Ascending aorta (tissue), 2 donors: ENCODE measurements at regions of chr7 and their contacts with region 1.

Region 1: DNA sequence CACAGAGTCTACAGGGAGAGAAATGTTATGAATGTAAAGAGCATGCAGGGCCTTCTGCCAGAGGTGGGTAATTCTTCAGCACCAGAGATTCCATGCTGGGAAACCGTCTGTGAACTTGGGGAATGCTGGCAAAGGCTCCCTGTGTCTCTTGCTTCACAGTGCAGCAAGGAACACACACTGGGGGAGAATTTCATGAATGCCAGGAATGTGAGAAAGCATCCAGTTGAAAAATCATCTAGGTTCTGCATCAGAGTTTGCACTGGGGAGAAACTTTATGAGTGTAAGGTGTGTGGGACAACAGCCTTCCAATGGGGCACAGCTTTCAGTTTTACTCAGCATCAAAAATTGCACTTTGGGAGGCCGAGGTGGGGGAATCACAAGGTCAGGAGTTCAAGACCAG is 224.3 kb upstream of the IGFBP3 start:
- DNase-seq: peak in 1 of 2 donors; percentile 75
- H3K4me3 ChIP-seq: no peak overlapping the region
- H3K27ac ChIP-seq: peak overlapping the region; percentile 8 to 9
- H3K4me1 ChIP-seq: peaks cover 9 to 19% of the 10 kb centered on the region in 2 donors
- H3K27me3 ChIP-seq: no peaks in the 10 kb centered on the region
- CTCF ChIP-seq: no peak

Region 2: GRCh38 chr7:45610019-45610418 is 535.4 kb before region 1 on chr7:
- intact Hi-C with region 1: no loop called
- DNase-seq: no peak
- H3K4me3 ChIP-seq: no peak overlapping the region
- H3K27ac ChIP-seq: no peak overlapping the region
- H3K4me1 ChIP-seq: no peaks in the 10 kb centered on the region
- H3K27me3 ChIP-seq: no peaks in the 10 kb centered on the region
- CTCF ChIP-seq: no peak

Region 3: DNA sequence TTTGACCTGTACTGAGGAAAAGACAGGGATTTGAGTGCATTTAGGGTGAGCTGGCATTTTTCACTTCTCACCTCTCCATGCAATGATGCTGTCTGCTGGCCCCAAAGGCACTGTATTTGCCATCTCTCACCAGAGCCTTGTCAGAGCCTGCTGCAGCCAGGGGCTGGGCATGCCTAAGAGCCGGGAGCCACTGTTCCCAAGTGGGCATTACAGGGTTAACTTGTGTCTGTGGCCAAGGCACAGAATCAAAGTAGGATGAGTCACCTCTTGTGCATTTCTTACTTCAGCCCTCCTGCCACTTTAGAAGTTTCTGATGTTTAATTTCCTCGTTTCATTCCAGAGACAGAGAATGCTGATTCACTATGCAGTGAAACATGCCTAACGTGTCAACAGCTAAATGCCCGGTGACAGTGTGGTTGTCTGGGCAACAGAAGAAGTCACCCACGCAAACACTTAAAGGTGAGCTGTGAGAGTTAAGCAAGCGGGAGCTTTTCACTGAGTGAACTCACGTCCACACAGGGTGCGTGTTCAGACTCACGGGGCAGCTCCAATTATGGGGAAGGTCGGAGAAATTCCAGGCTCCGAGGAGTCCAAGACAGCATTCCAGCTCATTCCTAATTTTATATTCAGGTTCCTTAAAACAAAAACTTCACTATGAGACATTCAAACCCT is 167.3 kb before region 1 on chr7:
- intact Hi-C with region 1: loop called (anchors 2 kb)
- DNase-seq: peak in 1 of 2 donors; percentile 88
- H3K4me3 ChIP-seq: peak overlapping the region in 1 of 2 donors; percentile 13
- H3K27ac ChIP-seq: peak overlapping the region; percentile 78 to 87
- H3K4me1 ChIP-seq: peaks cover 13 to 31% of the 10 kb centered on the region in 2 donors
- H3K27me3 ChIP-seq: no peaks in the 10 kb centered on the region
- CTCF ChIP-seq: no peak

Region 4: DNA sequence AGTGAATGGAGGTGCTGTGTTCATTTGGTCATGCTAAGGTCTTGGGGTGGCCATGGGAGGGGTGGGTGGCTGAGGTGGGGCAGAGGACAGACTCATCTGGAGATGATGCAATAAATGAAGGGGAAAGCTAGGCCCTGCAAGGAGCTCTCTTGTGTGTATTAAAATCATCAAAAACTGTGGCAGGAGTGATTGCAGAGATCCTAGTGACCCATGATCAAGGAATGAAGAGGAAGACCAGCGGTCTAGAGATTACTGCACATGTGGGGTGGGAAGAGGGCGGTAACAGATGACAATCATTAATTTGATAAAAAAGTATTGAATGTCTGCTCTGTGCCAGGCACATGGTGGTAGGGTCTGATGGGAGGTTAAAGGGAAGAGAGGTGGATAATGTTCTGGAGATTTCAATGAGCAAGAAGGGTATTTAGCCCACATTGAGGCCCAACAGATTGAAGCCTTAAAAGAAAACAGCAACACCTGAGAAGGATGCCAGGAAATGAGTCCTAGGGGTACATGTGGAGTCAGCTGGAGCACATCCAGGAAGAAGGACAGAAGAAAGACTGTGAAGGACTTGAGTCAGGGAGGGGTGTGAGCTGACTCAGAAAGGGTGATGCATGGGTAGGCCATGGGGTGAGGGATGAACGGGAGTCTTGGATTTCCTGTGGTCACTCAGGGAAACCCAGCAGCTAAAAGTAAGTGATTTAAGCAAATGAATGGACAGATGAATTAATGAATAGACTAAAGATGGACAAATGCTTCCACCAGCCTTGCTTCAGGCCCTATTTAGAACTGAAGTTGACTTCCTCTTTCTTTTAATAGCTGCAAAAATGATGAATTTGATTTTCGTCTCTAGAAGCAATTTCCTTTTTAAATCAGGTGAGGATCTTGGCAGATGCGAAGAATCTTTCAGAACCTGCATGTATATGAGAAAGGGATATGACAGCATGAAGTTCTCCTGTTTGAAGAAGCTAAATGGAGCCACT is 141.2 kb before region 1 on chr7:
- intact Hi-C with region 1: no loop called
- DNase-seq: no peak
- H3K4me3 ChIP-seq: no peak overlapping the region
- H3K27ac ChIP-seq: no peak overlapping the region
- H3K4me1 ChIP-seq: no peaks in the 10 kb centered on the region
- H3K27me3 ChIP-seq: no peaks in the 10 kb centered on the region
- CTCF ChIP-seq: no peak

Region 5: DNA sequence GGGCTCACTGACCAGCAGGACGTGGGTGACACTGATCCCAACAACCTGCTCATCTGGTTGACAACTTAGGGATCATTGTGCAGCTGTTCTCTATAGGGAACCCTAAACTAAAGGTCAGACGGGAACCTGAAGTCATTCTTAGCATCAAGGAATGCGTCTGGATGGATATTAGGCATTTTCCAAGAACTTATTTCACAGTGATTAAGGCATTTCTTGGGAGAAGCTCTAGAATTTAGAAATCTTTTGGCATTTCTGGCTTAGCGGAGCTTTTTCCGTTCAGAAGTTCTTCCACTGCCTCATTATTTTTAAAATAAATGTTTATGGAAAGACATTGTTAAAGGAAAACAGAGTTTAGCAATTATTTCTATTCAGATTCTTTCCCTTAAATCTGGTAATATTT is 79.0 kb after region 1 on chr7:
- intact Hi-C with region 1: loop called (anchors 1 kb)
- DNase-seq: no peak
- H3K4me3 ChIP-seq: no peak overlapping the region
- H3K27ac ChIP-seq: peak overlapping the region; percentile 8 to 41
- H3K4me1 ChIP-seq: peaks cover 0 to 6% of the 10 kb centered on the region in 2 donors
- H3K27me3 ChIP-seq: no peaks in the 10 kb centered on the region
- CTCF ChIP-seq: no peak

Region 6: DNA sequence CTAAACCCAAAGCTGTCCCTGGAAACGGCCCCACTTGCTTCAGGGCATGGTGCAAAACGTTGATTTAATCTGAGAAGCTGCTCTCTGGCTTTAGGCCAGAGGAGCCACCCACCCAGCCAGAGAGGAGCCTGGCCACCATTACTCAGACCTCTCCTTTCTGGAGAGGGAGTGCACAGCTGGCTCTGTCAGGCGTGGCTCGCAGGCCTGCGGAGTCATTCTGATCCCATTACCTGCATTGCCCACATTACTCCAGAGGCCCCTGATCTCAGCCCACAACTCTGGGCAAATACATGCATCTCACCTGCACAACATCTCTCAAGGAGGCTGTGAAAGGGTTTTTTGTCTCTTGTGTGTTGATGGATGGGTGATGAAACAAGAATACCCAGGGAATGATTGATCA is 145.7 kb after region 1 on chr7:
- intact Hi-C with region 1: loop called (anchors 2 kb)
- DNase-seq: no peak
- H3K4me3 ChIP-seq: no peak overlapping the region
- H3K27ac ChIP-seq: peak overlapping the region; percentile 74 to 83
- H3K4me1 ChIP-seq: peaks cover 6 to 11% of the 10 kb centered on the region in 2 donors
- H3K27me3 ChIP-seq: no peaks in the 10 kb centered on the region
- CTCF ChIP-seq: no peak